Mammary epithelial cell (primary cell): ENCODE measurements at regions of chr22 and their contacts with region 1.

Region 1: GRCh38 chr22:38257181-38257580 is 15.6 kb downstream of the TMEM184B start:
- DNase-seq: no peak
- H3K4me3 ChIP-seq: no peak overlapping the region
- H3K27ac ChIP-seq: no peak overlapping the region
- H3K4me1 ChIP-seq: peaks cover 13% of the 10 kb centered on the region
- H3K27me3 ChIP-seq: no peaks in the 10 kb centered on the region
- CTCF ChIP-seq: no peak

Region 2: DNA sequence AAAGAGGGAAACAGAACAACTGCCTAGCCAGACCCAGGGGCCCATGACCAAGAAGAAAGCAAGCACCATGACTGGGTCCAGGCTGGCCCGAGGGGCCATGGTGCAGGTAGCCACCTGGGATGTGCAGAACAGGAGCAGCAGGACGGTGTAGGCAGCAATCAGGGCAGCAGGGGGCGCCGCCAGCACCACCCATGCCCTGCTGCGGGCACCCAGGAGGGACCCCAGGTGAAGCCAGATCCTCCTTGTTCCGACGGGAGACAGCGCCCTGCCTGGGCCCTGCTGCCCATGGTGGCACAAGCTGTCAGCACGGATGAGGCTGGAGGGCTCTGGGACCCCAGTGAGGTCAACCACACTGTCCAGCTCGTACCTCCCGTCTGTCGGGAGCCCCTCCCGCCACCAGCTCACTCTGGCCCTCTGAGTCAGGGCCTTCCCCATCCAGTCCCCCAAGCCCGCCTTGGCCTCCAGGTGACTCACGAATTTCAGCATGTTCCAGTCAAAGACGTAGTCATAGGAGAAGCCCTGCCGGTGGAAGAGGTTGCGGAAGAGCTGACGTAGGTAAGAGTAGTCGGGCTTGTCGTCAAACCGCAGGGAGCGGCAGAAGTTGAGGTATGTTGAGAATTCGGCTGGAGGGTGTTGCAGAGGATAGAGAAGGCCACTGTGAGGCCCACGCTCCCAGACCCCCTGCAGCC is 41.3 kb after region 1 on chr22:
- CTCF ChIA-PET with region 1: no interaction called
- dilution Hi-C with region 1: no loop called
- in situ Hi-C with region 1: no loop called
- intact Hi-C with region 1: no loop called
- DNase-seq: peak; percentile 100
- H3K4me3 ChIP-seq: no peak overlapping the region
- H3K27ac ChIP-seq: peak overlapping the region; percentile 93
- H3K4me1 ChIP-seq: peaks cover 55% of the 10 kb centered on the region
- H3K27me3 ChIP-seq: no peaks in the 10 kb centered on the region
- CTCF ChIP-seq: peak; percentile 59

Region 3: DNA sequence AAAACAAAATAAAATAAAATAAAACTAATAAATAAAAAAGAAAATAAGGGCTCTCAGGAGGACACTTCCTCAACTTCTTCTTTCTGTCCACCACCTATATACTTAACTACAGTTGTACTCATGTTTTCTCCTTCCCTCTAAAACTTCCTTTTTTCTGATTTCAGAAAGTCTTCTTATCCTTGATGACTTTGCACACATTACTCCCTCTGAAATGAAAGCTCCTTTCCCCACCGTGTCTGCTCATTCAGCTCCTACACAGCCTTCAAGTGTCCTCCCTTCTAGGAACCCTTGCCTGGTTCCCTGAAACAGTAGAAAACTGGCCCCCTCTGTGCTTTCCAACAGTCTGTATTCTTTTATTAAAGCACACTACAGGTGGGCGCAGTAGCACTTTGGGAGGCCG is 267.2 kb after region 1 on chr22:
- CTCF ChIA-PET with region 1: no interaction called
- dilution Hi-C with region 1: loop called (anchors 10 kb)
- in situ Hi-C with region 1: no loop called
- intact Hi-C with region 1: no loop called
- DNase-seq: no peak
- H3K4me3 ChIP-seq: no peak overlapping the region
- H3K27ac ChIP-seq: no peak overlapping the region
- H3K4me1 ChIP-seq: no peaks in the 10 kb centered on the region
- H3K27me3 ChIP-seq: no peaks in the 10 kb centered on the region
- CTCF ChIP-seq: no peak